Transverse colon (tissue), 4 donors: ENCODE measurements at regions of chr10 and their contacts with region 1.

Region 1: DNA sequence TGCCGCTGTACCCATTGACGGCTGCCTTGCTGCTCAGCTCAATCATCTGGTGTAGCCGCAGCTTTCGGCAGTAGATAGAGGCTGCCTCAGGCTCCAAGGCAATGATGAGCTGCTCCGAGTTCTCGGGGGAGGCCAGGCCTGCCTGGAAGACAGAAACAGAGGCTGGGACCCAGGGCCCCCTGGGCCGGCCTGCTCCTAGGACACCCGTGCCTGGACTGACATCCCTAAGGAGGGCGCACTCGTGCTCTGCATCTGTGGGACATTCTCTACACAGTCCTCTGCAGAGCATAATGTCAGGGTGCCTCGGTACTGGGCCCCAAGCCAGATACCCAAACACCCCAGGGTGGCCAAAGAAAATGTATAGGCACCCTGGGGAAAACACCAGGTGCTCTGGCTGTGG is 58.5 kb downstream of the HSPA12A start:
- DNase-seq: no peak
- H3K4me3 ChIP-seq: no peak overlapping the region
- H3K27ac ChIP-seq: no peak overlapping the region
- H3K4me1 ChIP-seq: peaks cover 0 to 9% (median 0%) of the 10 kb centered on the region in 4 donors
- H3K27me3 ChIP-seq: no peaks in the 10 kb centered on the region
- CTCF ChIP-seq: no peak
- EP300 ChIP-seq: no peak
- POLR2A ChIP-seq: no peak

Region 2: GRCh38 chr10:115747811-115748210 is 936.0 kb before region 1 on chr10:
- in situ Hi-C with region 1: no loop called
- intact Hi-C with region 1: no loop called
- DNase-seq: no peak
- H3K4me3 ChIP-seq: no peak overlapping the region
- H3K27ac ChIP-seq: no peak overlapping the region
- H3K4me1 ChIP-seq: no peaks in the 10 kb centered on the region
- H3K27me3 ChIP-seq: no peaks in the 10 kb centered on the region
- CTCF ChIP-seq: no peak
- EP300 ChIP-seq: no peak
- POLR2A ChIP-seq: no peak

Region 3: DNA sequence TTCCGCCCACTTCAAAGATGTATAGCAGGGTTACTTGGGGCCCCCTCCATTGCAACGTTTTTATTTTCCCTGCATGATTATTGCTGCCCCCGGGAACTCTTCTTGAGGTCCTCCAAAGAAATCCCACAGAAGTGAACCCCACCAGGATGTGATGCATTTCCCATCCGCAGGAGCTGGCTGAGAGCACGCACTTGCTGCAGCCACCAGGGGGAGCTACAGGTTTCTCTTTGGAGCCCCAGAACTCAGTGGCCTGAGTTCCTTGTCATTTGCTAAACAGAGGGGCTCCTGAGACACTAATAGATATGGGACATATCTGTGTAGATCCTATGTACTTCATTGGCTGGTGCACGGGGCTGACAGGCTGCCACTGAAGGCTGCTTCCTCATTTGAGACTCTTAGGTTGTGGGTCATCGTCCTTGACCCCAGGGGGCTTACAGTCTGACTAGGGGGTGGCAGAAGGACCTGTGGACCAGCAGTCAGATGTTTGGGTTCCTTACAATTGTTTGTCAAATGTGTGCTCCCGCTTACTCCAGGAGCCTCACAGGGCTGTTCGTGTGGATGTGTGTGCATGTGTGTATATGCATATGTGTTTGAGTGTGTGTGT is 113.2 kb after region 1 on chr10:
- in situ Hi-C with region 1: loop called in 1 of 4 experiments (anchors 5 kb)
- intact Hi-C with region 1: no loop called
- DNase-seq: peak; percentile 76
- H3K4me3 ChIP-seq: no peak overlapping the region
- H3K27ac ChIP-seq: no peak overlapping the region
- H3K4me1 ChIP-seq: no peaks in the 10 kb centered on the region
- H3K27me3 ChIP-seq: peaks cover 15% of the 10 kb centered on the region
- CTCF ChIP-seq: peak; percentile 87 to 90 (median 89)
- EP300 ChIP-seq: no peak
- POLR2A ChIP-seq: no peak